ENCODE measurements at regions of chr13 and their contacts with region 1.

Region 1: GRCh38 chr13:49247643-49248621 is at the start of gene CDADC1:
- DNase-seq: peak; percentile 70 to 89 (median 75)
- ATAC-seq: peak; percentile 74 to 79
- H3K4me3 Mint-ChIP-seq: peak within 1 kb of the TSS; percentile 96 to 99 (median 98)
- H3K27ac Mint-ChIP-seq: peak within 1 kb of the TSS; percentile 95 to 99 (median 97)
- H3K4me1 Mint-ChIP-seq: peaks cover 19 to 56% (median 40%) of the 10 kb centered on the region in 4 donors
- H3K27me3 Mint-ChIP-seq: no peaks in the 10 kb centered on the region
- polyA plus RNA-seq, gene CDADC1: 7.8 to 8.9 (median 8.8) TPM

Region 2: GRCh38 chr13:49235705-49236431 is 12.1 kb before region 1 on chr13:
- POLR2A ChIA-PET with region 1: no interaction called
- DNase-seq: no peak
- ATAC-seq: no peak
- H3K4me3 Mint-ChIP-seq: no peak overlapping the region
- H3K27ac Mint-ChIP-seq: no peak overlapping the region
- H3K4me1 Mint-ChIP-seq: no peaks in the 10 kb centered on the region
- H3K27me3 Mint-ChIP-seq: peaks cover 0 to 1% (median 0%) of the 10 kb centered on the region in 5 donors

Region 3: DNA sequence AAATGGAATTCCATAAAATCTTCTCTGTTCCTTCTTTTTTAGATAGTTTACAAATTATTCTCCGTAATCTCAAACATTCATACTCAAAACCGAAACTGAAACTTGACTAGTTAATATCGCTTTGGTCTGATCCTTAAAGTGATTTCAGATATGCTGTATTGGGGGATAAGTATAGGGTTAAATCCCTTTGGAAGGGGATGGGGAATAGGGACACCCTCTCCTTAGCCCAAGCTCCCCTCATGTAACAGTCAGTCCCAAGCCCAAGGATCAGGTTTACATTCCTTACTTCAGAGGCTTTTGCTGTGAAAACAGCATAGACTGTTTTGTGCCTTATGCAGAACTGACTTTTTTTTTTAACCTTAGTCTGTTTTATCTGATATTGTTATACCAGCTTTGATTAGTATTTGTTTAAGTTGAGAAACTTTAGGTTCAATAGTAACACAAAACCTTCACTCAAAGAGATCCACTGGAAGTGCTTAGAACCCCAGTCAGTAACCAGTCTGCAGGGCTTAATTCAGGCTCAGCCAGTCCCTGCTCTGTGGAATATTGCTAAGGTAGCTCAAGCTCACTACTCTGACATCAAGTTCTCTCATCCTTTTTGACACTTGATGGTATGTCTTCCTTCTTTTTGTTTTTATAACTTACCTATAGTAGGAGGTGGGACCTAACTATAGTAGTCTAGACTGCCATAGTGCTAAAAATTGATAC is 10.3 kb after region 1 on chr13:
- POLR2A ChIA-PET with region 1: interaction called, 16 read pairs
- DNase-seq: peak in 3 of 10 donors; percentile 24 to 35 (median 33)
- ATAC-seq: peak; percentile 56 to 70
- H3K4me3 Mint-ChIP-seq: peak overlapping the region; percentile 74 to 91 (median 86)
- H3K27ac Mint-ChIP-seq: peak overlapping the region; percentile 84 to 95 (median 92)
- H3K4me1 Mint-ChIP-seq: peaks cover 2 to 33% (median 29%) of the 10 kb centered on the region in 4 donors
- H3K27me3 Mint-ChIP-seq: no peaks in the 10 kb centered on the region

Measured in naive thymus-derived CD8-positive, alpha-beta T cell (primary cell).